ENCODE measurements at regions of chr13 and their contacts with region 1.

Region 1: GRCh38 chr13:45340926-45341750 is at the start of gene TPT1:
- DNase-seq: peak; percentile 99
- H3K4me3 Mint-ChIP-seq: peak within 1 kb of the TSS; percentile 89
- H3K27ac Mint-ChIP-seq: peak within 1 kb of the TSS; percentile 95
- H3K4me1 Mint-ChIP-seq: peaks cover 28% of the 10 kb centered on the region
- H3K27me3 Mint-ChIP-seq: no peaks in the 10 kb centered on the region
- CTCF ChIP-seq: no peak
- total RNA-seq, gene TPT1: 4,896 and 5,827 TPM in 2 replicates

Region 2: DNA sequence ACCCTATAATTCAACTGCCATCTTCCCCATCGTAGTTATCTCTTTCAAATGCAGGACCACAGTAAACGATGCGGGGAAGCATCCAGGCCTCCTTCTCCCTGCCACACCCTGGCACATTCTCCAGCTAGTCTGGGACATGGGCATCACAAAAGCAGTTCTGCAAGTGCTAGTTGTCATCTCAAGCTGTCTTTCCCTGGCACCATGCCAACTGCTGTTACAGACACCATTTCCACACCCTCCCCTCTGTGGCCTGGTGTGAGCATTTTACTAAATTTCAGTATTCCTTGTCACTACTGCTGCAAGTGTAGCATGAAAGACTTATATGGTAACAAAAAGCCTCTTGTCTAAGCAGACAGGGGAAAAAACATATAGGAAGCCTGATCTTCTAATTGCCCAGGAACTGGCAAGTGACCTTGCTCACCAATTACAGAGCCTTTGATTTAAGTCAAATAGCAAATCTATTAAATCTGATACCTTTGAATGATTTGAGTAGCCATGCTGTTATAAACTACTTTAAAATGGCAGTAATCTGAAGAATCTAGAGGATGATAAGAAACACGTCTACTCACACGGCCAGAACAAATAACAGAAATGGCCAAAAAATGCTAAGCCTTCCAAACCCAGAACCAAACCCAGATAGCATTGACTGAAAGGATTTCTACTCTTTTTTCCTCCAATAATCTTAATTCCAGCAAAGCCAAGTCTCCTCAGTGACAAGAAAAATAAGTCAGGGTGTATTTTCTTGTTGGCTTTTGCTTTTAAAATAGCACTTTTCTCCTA is 530.9 kb before region 1 on chr13:
- CTCF ChIA-PET with region 1: no interaction called
- POLR2A ChIA-PET with region 1: no interaction called
- intact Hi-C with region 1: no loop called
- DNase-seq: peak; percentile 30
- H3K4me3 Mint-ChIP-seq: no peak overlapping the region
- H3K27ac Mint-ChIP-seq: no peak overlapping the region
- H3K4me1 Mint-ChIP-seq: peaks cover 34% of the 10 kb centered on the region
- H3K27me3 Mint-ChIP-seq: no peaks in the 10 kb centered on the region
- CTCF ChIP-seq: no peak

Region 3: DNA sequence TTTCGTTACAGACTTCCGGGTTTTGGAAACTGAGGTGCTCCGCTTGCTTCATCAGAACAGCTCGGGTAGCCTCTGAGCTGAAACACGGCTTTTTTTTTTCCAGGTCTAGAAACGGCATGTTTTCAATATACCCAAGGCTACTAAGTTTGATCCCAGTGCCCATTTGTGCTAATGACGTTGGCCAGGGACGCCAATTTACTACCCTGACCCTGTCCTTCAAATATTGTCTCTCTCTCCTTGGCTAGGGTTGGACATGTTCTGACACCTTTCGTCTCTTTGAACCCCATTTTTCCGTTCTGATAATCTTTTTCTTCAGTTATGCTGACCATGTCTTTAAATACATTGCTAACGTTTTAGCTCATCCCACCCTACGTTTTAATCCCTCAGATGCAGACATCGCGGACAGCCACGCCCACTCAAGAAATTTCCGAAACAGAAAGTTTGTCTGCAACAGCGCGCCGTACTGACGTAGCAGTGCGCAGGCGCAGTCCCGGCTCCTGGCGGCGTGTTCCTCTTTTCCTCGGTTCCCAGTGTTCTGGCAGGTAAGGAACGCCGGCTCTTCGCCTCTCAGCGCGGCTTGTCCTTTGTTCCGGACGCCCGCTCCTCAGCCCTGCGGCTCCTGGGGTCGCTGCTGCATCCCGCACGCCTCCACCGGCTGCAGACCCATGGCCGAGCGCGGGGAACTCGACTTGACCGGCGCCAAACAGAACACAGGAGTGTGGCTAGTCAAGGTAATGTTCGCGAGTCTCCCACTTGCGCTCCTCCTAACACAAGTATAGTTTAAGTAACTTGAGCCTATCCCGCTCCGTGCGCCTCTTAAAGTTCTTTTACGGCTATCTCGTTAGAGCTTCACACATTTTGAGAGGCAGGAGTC is 220.9 kb before region 1 on chr13 and contains the start of gene GTF2F2:
- CTCF ChIA-PET with region 1: no interaction called
- POLR2A ChIA-PET with region 1: interaction called, 14 read pairs
- intact Hi-C with region 1: no loop called
- DNase-seq: peak; percentile 85
- H3K4me3 Mint-ChIP-seq: no peak within 1 kb of the TSS
- H3K27ac Mint-ChIP-seq: no peak within 1 kb of the TSS
- H3K4me1 Mint-ChIP-seq: peaks cover 8% of the 10 kb centered on the region
- H3K27me3 Mint-ChIP-seq: no peaks in the 10 kb centered on the region
- CTCF ChIP-seq: no peak
- total RNA-seq, gene GTF2F2: 41.2 and 47.4 TPM in 2 replicates

Region 4: GRCh38 chr13:45325806-45326205 is 15.3 kb before region 1 on chr13:
- CTCF ChIA-PET with region 1: no interaction called
- POLR2A ChIA-PET with region 1: interaction called, 104 read pairs
- intact Hi-C with region 1: no loop called
- DNase-seq: peak; percentile 81
- H3K4me3 Mint-ChIP-seq: no peak overlapping the region
- H3K27ac Mint-ChIP-seq: no peak overlapping the region
- H3K4me1 Mint-ChIP-seq: peaks cover 16% of the 10 kb centered on the region
- H3K27me3 Mint-ChIP-seq: no peaks in the 10 kb centered on the region
- CTCF ChIP-seq: no peak

Region 5: DNA sequence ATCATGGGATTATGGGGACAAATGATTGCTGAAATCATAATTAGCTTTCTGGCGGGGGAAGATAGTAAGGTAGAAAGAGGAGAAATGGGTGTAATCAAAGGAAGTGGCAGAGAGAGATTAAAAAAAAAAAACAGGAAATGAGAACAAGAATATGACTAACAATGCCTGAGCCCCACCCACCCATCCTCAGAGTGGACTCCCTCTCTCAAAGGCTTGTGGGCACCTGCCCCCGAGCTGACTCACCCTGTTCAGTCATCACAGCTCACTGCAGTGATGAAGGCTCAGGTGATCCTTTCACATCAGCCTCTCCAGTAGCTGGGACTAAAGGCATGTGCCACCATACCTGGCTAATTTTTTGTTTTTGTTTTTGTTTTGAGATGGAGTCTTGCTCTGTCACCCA is 26.2 kb after region 1 on chr13:
- CTCF ChIA-PET with region 1: interaction called, 11 read pairs
- POLR2A ChIA-PET with region 1: interaction called, 20 read pairs
- intact Hi-C with region 1: loop called (anchors 1 kb)
- DNase-seq: peak; percentile 98
- H3K4me3 Mint-ChIP-seq: peak overlapping the region; percentile 12
- H3K27ac Mint-ChIP-seq: peak overlapping the region; percentile 95
- H3K4me1 Mint-ChIP-seq: peaks cover 35% of the 10 kb centered on the region
- H3K27me3 Mint-ChIP-seq: no peaks in the 10 kb centered on the region
- CTCF ChIP-seq: no peak

Region 6: GRCh38 chr13:45464687-45465453 is 123.7 kb after region 1 on chr13 and contains the start of gene COG3:
- CTCF ChIA-PET with region 1: no interaction called
- POLR2A ChIA-PET with region 1: interaction called, 19 read pairs
- intact Hi-C with region 1: no loop called
- DNase-seq: peak; percentile 97
- H3K4me3 Mint-ChIP-seq: peak within 1 kb of the TSS; percentile 90
- H3K27ac Mint-ChIP-seq: peak within 1 kb of the TSS; percentile 90
- H3K4me1 Mint-ChIP-seq: peaks cover 30% of the 10 kb centered on the region
- H3K27me3 Mint-ChIP-seq: no peaks in the 10 kb centered on the region
- CTCF ChIP-seq: peak; percentile 13
- total RNA-seq, gene COG3: 42.8 and 44.1 TPM in 2 replicates

Measured in MCF 10A (cell line).